ENCODE measurements at regions of chr4 and their contacts with region 1.

Region 1: DNA sequence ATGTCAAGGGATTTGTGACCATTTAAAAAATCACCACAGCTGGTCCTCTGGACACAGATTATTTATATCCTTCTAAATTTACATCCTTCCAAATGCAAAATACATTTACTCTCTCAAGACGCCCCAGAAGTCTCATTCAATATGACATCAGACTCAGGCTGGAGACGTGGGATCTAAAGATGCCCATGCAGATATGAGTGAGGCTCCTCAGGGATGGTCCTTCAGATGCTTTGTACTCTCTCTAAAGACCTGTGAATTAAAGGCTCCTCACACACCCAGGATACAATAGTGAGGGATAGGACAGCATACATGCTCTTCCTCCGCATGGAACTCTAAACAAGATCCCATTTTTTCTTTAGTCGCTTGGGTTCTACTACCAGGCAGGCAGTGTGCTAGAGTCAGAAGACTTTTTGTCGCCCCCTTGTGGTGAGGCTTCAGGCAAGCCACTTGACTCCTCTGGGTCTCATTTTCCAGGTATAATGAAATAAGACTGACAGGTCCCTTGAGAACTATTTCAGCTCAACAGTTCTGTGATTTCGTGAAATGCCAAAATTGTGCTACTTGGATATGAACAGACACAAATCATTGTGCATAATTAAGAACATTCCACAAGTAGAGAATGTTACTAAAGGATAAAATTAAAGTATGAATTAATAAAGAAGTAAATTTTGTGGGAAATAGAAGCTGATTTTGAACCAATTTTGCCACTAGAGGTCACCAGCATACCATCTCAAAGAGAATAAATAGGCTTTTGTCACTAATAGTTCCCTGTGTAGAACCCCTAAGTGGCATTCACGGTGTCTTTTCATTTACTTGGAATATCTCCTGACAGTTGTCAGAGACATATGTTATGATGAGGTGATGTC is 13.7 kb upstream of the SCOC start:
- DNase-seq: peak; percentile 86 to 90 (median 87)
- H3K4me3 ChIP-seq: no peak overlapping the region
- H3K27ac ChIP-seq: no peak overlapping the region
- H3K4me1 ChIP-seq: peaks cover 7 to 22% (median 13%) of the 10 kb centered on the region in 4 experiments
- H3K27me3 ChIP-seq: no peaks in the 10 kb centered on the region

Region 2: GRCh38 chr4:140012688-140013486 is 346.9 kb before region 1 on chr4:
- CTCF ChIA-PET with region 1: interaction called, 12 read pairs
- POLR2A ChIA-PET with region 1: interaction called, 3 read pairs
- DNase-seq: peak; percentile 82 to 86 (median 84)
- H3K4me3 ChIP-seq: peak overlapping the region in 4 of 7 experiments; percentile 12 to 64 (median 37)
- H3K27ac ChIP-seq: peak overlapping the region in 1 of 2 experiments; percentile 20
- H3K4me1 ChIP-seq: peaks cover 0 to 13% (median 8%) of the 10 kb centered on the region in 4 experiments
- H3K27me3 ChIP-seq: no peaks in the 10 kb centered on the region

Region 3: DNA sequence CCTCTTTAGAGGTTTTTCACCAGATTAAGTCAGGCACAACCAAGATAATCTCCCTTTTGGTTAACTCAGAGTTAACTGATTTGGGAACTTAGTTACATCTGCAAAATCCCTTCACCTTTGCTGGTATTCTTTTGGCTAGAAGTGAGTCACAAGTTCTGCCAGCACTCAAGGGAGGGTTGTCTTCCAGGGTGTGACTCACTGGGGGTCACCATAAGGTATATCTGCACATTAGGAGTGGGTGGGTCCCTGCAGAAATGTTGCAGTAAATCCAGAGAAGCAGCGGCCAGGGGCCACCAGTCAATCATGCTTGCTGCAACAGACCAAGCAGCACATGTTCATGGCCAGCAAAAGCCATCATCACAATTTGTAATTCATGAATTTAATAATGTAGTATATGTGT is 146.0 kb before region 1 on chr4:
- CTCF ChIA-PET with region 1: no interaction called
- POLR2A ChIA-PET with region 1: no interaction called
- DNase-seq: peak in 1 of 3 donors; percentile 17
- H3K4me3 ChIP-seq: no peak overlapping the region
- H3K27ac ChIP-seq: no peak overlapping the region
- H3K4me1 ChIP-seq: peaks cover 0 to 3% (median 0%) of the 10 kb centered on the region in 4 experiments
- H3K27me3 ChIP-seq: no peaks in the 10 kb centered on the region

Region 4: GRCh38 chr4:140286456-140286855 is 73.3 kb before region 1 on chr4:
- CTCF ChIA-PET with region 1: no interaction called
- POLR2A ChIA-PET with region 1: no interaction called
- DNase-seq: no peak
- H3K4me3 ChIP-seq: no peak overlapping the region
- H3K27ac ChIP-seq: no peak overlapping the region
- H3K4me1 ChIP-seq: no peaks in the 10 kb centered on the region
- H3K27me3 ChIP-seq: no peaks in the 10 kb centered on the region

Region 5: GRCh38 chr4:140343303-140343702 is 16.5 kb before region 1 on chr4:
- CTCF ChIA-PET with region 1: interaction called, 40 read pairs
- POLR2A ChIA-PET with region 1: no interaction called
- DNase-seq: peak in 2 of 3 donors; percentile 52 to 58
- H3K4me3 ChIP-seq: peak overlapping the region in 5 of 7 experiments; percentile 26 to 69 (median 49)
- H3K27ac ChIP-seq: no peak overlapping the region
- H3K4me1 ChIP-seq: peaks cover 0 to 8% (median 4%) of the 10 kb centered on the region in 4 experiments
- H3K27me3 ChIP-seq: no peaks in the 10 kb centered on the region

Region 6: DNA sequence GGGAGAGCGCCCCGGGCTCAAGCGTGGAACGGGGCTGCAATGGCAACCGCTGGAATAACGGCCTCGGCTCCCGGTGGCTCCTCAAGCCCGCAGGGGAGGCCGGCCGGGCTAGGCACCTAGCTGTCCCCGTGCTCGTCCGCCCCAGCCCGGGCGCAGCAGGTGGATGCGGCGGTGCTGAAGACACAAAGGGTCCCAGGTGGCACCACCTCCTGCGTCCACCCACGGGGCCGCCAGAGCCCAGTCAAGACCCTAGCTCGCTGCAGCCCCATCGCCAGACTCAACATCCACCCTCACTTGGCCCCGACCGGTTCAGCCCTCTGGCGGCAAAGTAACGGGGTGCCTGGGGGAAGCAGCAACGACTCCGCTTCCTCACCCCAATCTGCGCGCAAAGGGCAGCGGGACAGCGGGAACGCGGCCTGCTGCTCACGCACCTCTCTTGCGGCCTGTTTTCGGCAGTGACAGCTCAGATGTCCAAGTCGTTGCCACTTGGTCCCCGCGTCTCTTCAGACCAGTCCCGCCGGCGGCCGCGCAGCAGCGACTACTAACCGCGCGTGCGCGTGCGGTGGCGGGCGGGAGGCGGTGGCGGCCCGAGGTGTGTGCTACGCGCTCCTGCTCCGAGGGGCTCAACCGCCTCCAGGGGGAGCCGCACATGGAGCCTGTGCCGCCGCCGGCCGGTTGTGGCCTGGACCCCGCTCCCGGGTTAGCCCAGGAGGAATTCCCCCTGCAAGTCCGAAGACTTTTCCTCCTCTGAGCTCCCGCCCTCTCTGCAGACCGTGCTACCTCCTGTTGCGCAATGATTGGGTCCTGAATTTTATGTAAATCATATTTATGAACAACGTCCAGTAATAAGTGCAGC is 67.5 kb after region 1 on chr4 and contains the start of gene CLGN:
- CTCF ChIA-PET with region 1: interaction called, 11 read pairs
- POLR2A ChIA-PET with region 1: no interaction called
- DNase-seq: peak; percentile 84 to 94 (median 90)
- H3K4me3 ChIP-seq: peak within 1 kb of the TSS; percentile 75 to 94 (median 84)
- H3K27ac ChIP-seq: peak within 1 kb of the TSS; percentile 37 to 59
- H3K4me1 ChIP-seq: peaks cover 6 to 19% (median 12%) of the 10 kb centered on the region in 4 experiments
- H3K27me3 ChIP-seq: no peaks in the 10 kb centered on the region

Region 7: GRCh38 chr4:140617499-140618248 is 257.9 kb after region 1 on chr4:
- CTCF ChIA-PET with region 1: interaction called, 10 read pairs
- POLR2A ChIA-PET with region 1: no interaction called
- DNase-seq: peak; percentile 14 to 67 (median 53)
- H3K4me3 ChIP-seq: no peak overlapping the region
- H3K27ac ChIP-seq: no peak overlapping the region
- H3K4me1 ChIP-seq: peaks cover 0 to 7% (median 0%) of the 10 kb centered on the region in 4 experiments
- H3K27me3 ChIP-seq: peaks cover 0 to 2% (median 0%) of the 10 kb centered on the region in 5 experiments

Measured in common myeloid progenitor, CD34-positive (primary cell).